Right cardiac atrium (tissue), 5 donors: ENCODE measurements at regions of chr19 and their contacts with region 1.

Region 1: GRCh38 chr19:39125554-39126311 is at the start of gene PAK4:
- DNase-seq: peak; percentile 98 to 99 (median 99)
- ATAC-seq: peak; percentile 99
- H3K4me3 ChIP-seq: peak within 1 kb of the TSS; percentile 74
- H3K27ac ChIP-seq: peak within 1 kb of the TSS; percentile 55
- H3K4me1 ChIP-seq: no peaks in the 10 kb centered on the region
- H3K27me3 ChIP-seq: no peaks in the 10 kb centered on the region
- total RNA-seq, gene PAK4: 19.9 to 24.4 (median 21.7) TPM

Region 2: DNA sequence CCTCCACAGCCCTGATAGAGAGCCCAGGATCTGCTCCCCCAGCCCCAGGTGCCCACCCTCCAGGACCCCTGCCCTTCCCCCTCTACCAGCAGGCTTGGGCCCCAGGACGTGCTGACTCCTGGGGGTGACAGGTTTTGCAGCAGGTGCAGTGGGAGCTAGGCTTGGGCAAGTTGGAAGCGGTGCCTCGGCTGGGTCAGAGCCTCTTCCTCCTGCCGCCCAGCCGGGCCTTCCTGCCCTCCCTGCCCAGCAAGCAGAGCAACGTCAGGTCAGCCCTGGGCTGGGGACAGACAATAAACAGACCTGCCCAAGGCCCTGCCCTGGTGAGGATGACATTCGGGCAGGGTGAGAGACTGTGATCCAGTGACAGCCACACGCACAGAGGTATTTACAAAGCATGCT is 61.8 kb after region 1 on chr19:
- intact Hi-C with region 1: loop called (anchors 2 to 5 kb)
- DNase-seq: no peak
- ATAC-seq: peak; percentile 29 to 40
- H3K4me3 ChIP-seq: no peak overlapping the region
- H3K27ac ChIP-seq: no peak overlapping the region
- H3K4me1 ChIP-seq: no peaks in the 10 kb centered on the region
- H3K27me3 ChIP-seq: no peaks in the 10 kb centered on the region

Region 3: GRCh38 chr19:39319892-39320248 is 194.1 kb after region 1 on chr19:
- intact Hi-C with region 1: loop called in 3 of 4 experiments (anchors 5 kb)
- DNase-seq: no peak
- ATAC-seq: peak in 1 of 2 donors; percentile 5
- H3K4me3 ChIP-seq: peak overlapping the region; percentile 80
- H3K27ac ChIP-seq: no peak overlapping the region
- H3K4me1 ChIP-seq: no peaks in the 10 kb centered on the region
- H3K27me3 ChIP-seq: no peaks in the 10 kb centered on the region